WTC11 (cell line): ENCODE measurements at regions of chr20 and their contacts with region 1.

Region 1: GRCh38 chr20:49508435-49509199 is 26.1 kb upstream of the KCNB1 start:
- DNase-seq: no peak
- ATAC-seq: peak; percentile 75
- H3K4me3 Mint-ChIP-seq: no peak overlapping the region
- H3K27ac Mint-ChIP-seq: no peak overlapping the region
- H3K4me1 Mint-ChIP-seq: 0 out of 2 replicates have a peak, but pooled peaks cover under 1% of the 10 kb centered on the region
- H3K27me3 Mint-ChIP-seq: no peaks in the 10 kb centered on the region
- CTCF ChIP-seq: peak; percentile 43

Region 2: GRCh38 chr20:49338061-49338460 is 170.6 kb before region 1 on chr20:
- CTCF ChIA-PET with region 1: interaction called, 11 read pairs
- POLR2A ChIA-PET with region 1: no interaction called
- DNase-seq: no peak
- ATAC-seq: no peak
- H3K4me3 Mint-ChIP-seq: no peak overlapping the region
- H3K27ac Mint-ChIP-seq: no peak overlapping the region
- H3K4me1 Mint-ChIP-seq: no peaks in the 10 kb centered on the region
- H3K27me3 Mint-ChIP-seq: 0 out of 2 replicates have a peak, but pooled peaks cover under 1% of the 10 kb centered on the region
- CTCF ChIP-seq: no peak

Region 3: GRCh38 chr20:49356676-49357075 is 151.9 kb before region 1 on chr20:
- CTCF ChIA-PET with region 1: no interaction called
- POLR2A ChIA-PET with region 1: no interaction called
- DNase-seq: no peak
- ATAC-seq: no peak
- H3K4me3 Mint-ChIP-seq: no peak overlapping the region
- H3K27ac Mint-ChIP-seq: no peak overlapping the region
- H3K4me1 Mint-ChIP-seq: no peaks in the 10 kb centered on the region
- H3K27me3 Mint-ChIP-seq: no peaks in the 10 kb centered on the region
- CTCF ChIP-seq: no peak